PC-9 (cell line): ENCODE measurements at regions of chr5 and their contacts with region 1.

Region 1: DNA sequence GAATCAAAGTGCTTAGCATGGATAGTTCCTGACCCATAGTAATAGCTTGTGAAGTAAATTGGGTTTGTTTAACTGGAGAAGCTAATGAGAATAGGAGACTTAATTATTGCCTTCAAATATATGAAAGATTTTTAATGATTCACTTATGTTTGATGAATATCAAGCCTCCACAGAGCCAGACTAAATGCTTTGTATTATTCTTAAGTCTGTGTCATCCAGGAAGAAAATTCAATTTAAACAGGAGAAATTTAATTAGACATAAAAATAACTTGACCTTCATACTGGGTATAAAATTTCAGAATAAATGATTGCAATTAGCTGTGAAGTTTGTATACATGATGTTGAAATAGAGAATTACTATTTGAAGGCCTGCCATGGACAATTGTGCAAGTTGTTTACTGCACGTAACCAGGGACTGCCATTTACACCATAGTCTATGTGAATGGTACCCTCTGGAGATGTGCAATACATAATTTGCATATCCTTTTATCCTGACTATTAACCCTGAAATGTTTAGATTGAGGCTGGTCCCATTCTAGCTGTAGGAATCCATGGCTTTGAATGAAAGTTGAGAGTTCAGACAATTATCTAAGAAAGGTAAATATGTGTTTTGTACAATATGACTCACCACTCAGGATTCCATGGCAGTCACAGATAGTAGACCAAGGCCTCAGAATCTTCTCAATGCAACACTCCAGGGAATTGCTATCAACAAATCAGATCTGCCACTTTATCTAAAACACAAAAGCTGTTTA is 133.5 kb upstream of the IL12B start:
- DNase-seq: peak; percentile 29 to 86
- H3K4me3 ChIP-seq: no peak overlapping the region
- H3K27ac ChIP-seq: no peak overlapping the region
- H3K4me1 ChIP-seq: peaks cover 40% of the 10 kb centered on the region
- H3K27me3 ChIP-seq: no peaks in the 10 kb centered on the region
- CTCF ChIP-seq: no peak

Region 2: GRCh38 chr5:159504857-159505304 is 41.1 kb after region 1 on chr5:
- CTCF ChIA-PET with region 1: no interaction called
- POLR2A ChIA-PET with region 1: interaction called, 3 read pairs
- intact Hi-C with region 1: loop called (anchors 2 kb)
- DNase-seq: peak; percentile 89 to 93
- H3K4me3 ChIP-seq: peak overlapping the region; percentile 18; the same call in 1 of the 2 replicates
- H3K27ac ChIP-seq: peak overlapping the region; percentile 82
- H3K4me1 ChIP-seq: peaks cover 38% of the 10 kb centered on the region
- H3K27me3 ChIP-seq: no peaks in the 10 kb centered on the region
- CTCF ChIP-seq: no peak